ENCODE measurements at regions of chr3 and their contacts with region 1.

Region 1: DNA sequence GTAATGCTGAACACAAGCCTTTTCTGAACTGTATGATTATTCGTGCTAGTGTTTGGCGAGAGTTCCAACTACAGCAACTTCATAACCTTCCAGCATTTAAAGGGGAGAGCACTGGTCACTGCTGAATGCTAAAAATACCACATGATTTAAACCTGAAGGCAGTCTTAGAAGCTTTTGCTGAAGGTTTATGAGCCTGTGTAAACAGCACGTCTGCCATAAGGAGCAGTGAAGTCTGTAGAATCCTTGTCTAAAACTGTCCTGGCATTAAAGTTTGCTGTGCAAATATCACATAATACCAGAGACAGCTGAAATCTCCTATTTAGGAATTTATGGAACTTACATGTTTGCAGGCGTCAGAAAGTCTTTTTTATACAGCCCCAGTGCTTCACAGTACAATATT is 5.9 kb downstream of the SATB1 start:
- DNase-seq: no peak
- H3K4me3 ChIP-seq: peak overlapping the region in 1 of 4 donors; percentile 12
- H3K27ac ChIP-seq: peak overlapping the region in 3 of 4 donors; percentile 17 to 95 (median 56)
- H3K4me1 ChIP-seq: peaks cover 0 to 63% (median 33%) of the 10 kb centered on the region in 4 donors
- H3K27me3 ChIP-seq: no peaks in the 10 kb centered on the region
- CTCF ChIP-seq: no peak
- EP300 ChIP-seq: no peak
- POLR2A ChIP-seq: no peak

Region 2: DNA sequence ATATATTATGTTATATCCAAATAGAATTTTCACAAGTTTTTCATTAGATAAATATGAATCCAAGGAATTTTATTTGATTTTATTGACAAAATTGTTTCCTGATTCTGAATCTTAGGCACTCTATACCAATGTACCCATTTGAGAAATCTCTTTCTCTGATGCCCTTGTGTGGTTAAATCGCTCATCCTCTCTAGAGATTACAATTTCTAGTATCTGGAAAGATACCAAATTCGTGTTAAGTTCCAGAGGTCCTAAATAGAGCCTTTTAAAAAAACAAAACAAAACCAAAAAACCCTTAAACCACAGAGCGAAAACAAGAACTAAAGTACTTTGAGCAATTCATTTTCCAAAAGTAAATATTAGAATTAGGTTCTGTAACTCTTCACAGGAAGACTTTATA is 14.1 kb before region 1 on chr3:
- intact Hi-C with region 1: loop called (anchors 2 kb)
- DNase-seq: no peak
- H3K4me3 ChIP-seq: no peak overlapping the region
- H3K27ac ChIP-seq: no peak overlapping the region
- H3K4me1 ChIP-seq: peaks cover 0 to 33% (median 20%) of the 10 kb centered on the region in 4 donors
- H3K27me3 ChIP-seq: no peaks in the 10 kb centered on the region
- CTCF ChIP-seq: no peak
- EP300 ChIP-seq: no peak
- POLR2A ChIP-seq: no peak

Region 3: DNA sequence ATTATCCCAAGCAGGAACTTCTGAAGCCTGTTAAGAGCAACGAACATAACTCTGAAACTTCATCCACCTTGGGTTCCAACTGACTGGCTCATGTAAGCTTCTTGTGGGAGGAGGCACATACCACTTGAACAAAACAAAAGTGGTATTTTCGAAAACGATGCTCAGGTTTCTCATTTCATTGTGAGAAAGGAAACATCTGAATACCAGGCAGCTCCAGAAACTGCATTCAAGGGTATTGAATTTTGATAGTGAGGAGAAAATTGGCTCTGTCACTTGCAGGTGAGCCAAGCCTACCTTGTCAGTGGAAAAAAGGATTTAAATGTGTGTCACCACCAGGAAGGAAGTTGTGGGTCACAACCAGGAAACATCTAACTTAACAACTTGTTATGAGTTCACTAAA is 224.0 kb after region 1 on chr3:
- intact Hi-C with region 1: no loop called
- DNase-seq: no peak
- H3K4me3 ChIP-seq: no peak overlapping the region
- H3K27ac ChIP-seq: no peak overlapping the region
- H3K4me1 ChIP-seq: no peaks in the 10 kb centered on the region
- H3K27me3 ChIP-seq: no peaks in the 10 kb centered on the region
- CTCF ChIP-seq: no peak
- EP300 ChIP-seq: no peak
- POLR2A ChIP-seq: no peak